Heart left ventricle (tissue), 16 donors: ENCODE measurements at regions of chr5 and their contacts with region 1.

Region 1: DNA sequence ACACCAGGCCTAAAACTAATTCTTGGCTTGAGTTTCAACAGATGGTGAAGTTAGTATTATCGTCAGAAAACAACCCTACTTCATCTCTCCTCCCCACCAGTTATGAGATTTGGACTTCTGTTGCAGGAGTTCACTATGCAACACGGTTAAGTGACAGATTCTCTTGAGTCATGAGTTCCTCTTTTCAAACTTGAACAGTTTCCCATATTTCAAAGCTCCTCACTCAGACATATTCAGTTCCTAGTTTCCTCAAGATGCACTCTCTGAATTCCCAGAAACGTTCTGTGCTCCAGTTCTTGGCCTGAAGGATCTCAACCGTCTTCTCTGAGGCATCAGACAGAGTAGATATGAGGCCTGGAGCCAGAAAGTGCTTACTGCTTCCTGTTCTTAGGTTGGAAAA is 7.3 kb upstream of the PTGER4 start:
- DNase-seq: no peak
- ATAC-seq: peak in 3 of 4 donors; percentile 17 to 62 (median 61)
- H3K4me3 ChIP-seq: no peak overlapping the region
- H3K27ac ChIP-seq: peak overlapping the region in 1 of 12 donors; percentile 81
- H3K4me1 ChIP-seq: peaks cover 0 to 63% (median 7%) of the 10 kb centered on the region in 12 donors
- H3K27me3 ChIP-seq: no peaks in the 10 kb centered on the region
- CTCF ChIP-seq: no peak
- POLR2A ChIP-seq: no peak

Region 2: DNA sequence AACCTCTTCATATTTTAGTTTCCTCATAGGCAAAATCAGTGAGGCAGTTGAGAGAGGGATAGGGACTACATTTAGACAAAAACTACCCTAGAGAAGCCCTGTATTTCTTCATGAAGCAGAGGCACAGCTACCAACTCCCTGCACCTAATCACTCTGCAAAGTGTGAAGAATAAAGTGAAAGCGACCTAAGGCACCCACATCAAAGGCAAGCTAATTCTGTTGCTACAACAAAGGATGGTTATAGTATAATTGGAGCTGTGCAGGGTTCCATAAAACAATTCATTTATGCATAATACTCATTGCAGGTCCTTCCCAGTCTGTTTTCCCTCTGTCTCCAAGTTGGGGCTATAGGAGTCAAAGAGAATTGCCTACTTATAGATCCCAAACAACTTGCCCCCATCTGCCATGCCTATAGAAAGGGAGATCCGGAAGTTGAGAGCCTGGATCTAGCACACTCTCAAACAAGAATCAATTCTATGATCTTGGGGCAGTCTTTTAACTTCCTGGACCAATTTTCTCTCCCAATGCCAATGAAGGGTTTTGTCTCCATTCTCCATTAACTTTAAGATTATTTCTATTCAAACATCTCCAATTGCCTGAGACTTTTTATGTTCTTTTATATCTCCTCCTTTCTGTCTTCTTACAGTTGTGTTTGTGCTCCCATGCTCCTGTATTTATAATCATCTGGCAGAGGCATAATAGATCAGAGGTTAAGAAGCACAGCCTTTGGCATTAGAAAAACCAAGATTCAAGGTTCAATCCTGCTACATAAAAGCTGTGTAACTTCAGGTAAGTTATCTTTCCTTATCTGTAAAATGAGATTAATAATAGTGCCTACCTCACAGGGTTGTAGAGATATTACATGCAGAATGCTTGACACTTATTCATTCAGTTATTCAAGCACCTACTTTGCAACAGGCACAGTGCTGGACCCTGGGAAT is 48.7 kb before region 1 on chr5:
- intact Hi-C with region 1: loop called in 1 of 10 experiments (anchors 5 kb)
- DNase-seq: no peak
- ATAC-seq: no peak
- H3K4me3 ChIP-seq: no peak overlapping the region
- H3K27ac ChIP-seq: peak overlapping the region in 6 of 12 donors; percentile 49 to 70 (median 54)
- H3K4me1 ChIP-seq: peaks cover 0 to 42% (median 0%) of the 10 kb centered on the region in 12 donors
- H3K27me3 ChIP-seq: no peaks in the 10 kb centered on the region
- CTCF ChIP-seq: no peak
- POLR2A ChIP-seq: no peak

Region 3: DNA sequence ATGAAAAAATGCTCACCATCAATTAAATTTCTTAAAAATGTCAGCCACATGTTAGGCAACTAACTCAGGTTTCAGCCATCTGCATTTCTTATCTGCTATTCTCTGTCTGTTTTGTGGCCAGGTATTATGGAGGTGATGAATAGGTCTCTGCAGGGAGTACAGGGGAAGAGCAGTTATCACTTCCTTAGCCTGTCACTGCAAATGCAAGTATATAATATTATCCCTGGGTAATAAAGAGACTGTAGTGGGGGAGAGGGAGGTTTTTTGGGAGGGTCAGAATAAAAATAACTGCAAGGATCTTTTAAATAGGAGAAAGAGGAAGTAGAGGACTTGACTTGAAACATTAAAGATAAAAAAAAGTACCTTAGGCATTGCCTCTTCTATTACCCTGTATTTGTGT is 42.3 kb before region 1 on chr5:
- intact Hi-C with region 1: loop called in 1 of 10 experiments (anchors 5 kb)
- DNase-seq: no peak
- ATAC-seq: no peak
- H3K4me3 ChIP-seq: no peak overlapping the region
- H3K27ac ChIP-seq: no peak overlapping the region
- H3K4me1 ChIP-seq: peaks cover 0 to 17% (median 0%) of the 10 kb centered on the region in 12 donors
- H3K27me3 ChIP-seq: no peaks in the 10 kb centered on the region
- CTCF ChIP-seq: no peak
- POLR2A ChIP-seq: no peak

Region 4: GRCh38 chr5:40716000-40716399 is 43.6 kb after region 1 on chr5:
- intact Hi-C with region 1: no loop called
- DNase-seq: no peak
- ATAC-seq: no peak
- H3K4me3 ChIP-seq: no peak overlapping the region
- H3K27ac ChIP-seq: no peak overlapping the region
- H3K4me1 ChIP-seq: peaks cover 0 to 8% (median 0%) of the 10 kb centered on the region in 12 donors
- H3K27me3 ChIP-seq: no peaks in the 10 kb centered on the region
- CTCF ChIP-seq: peak in 3 of 12 donors; percentile 5 to 14 (median 13)
- POLR2A ChIP-seq: no peak

Region 5: GRCh38 chr5:40755407-40756365 is 83.3 kb after region 1 on chr5 and contains the start of gene TTC33:
- intact Hi-C with region 1: no loop called
- DNase-seq: peak; percentile 95 to 97 (median 96)
- ATAC-seq: peak; percentile 98 to 99 (median 99)
- H3K4me3 ChIP-seq: peak within 1 kb of the TSS; percentile 57 to 98 (median 84)
- H3K27ac ChIP-seq: peak within 1 kb of the TSS; percentile 49 to 95 (median 90)
- H3K4me1 ChIP-seq: peaks cover 0 to 20% (median 11%) of the 10 kb centered on the region in 12 donors
- H3K27me3 ChIP-seq: no peaks in the 10 kb centered on the region
- CTCF ChIP-seq: peak; percentile 43 to 88 (median 75)
- POLR2A ChIP-seq: peak in 1 of 2 donors; percentile 59
- total RNA-seq, gene TTC33: 11.3 to 20.0 (median 14.2) TPM